ENCODE measurements at regions of chr3 and their contacts with region 1.

Region 1: GRCh38 chr3:131381444-131382291 is at the start of gene NUDT16:
- DNase-seq: peak; percentile 99
- H3K4me3 Mint-ChIP-seq: peak within 1 kb of the TSS; percentile 93
- H3K27ac Mint-ChIP-seq: peak within 1 kb of the TSS; percentile 84
- H3K4me1 Mint-ChIP-seq: peaks cover 22% of the 10 kb centered on the region
- H3K27me3 Mint-ChIP-seq: no peaks in the 10 kb centered on the region
- total RNA-seq, gene NUDT16: 7.4 to 8.6 TPM

Region 2: GRCh38 chr3:131402391-131403039 is 20.8 kb after region 1 on chr3:
- CTCF ChIA-PET with region 1: no interaction called
- POLR2A ChIA-PET with region 1: no interaction called
- intact Hi-C with region 1: no loop called
- DNase-seq: no peak
- H3K4me3 Mint-ChIP-seq: no peak overlapping the region
- H3K27ac Mint-ChIP-seq: no peak overlapping the region
- H3K4me1 Mint-ChIP-seq: no peaks in the 10 kb centered on the region
- H3K27me3 Mint-ChIP-seq: no peaks in the 10 kb centered on the region

Region 3: GRCh38 chr3:131470377-131470776 is 88.7 kb after region 1 on chr3:
- CTCF ChIA-PET with region 1: interaction called, 4 read pairs
- POLR2A ChIA-PET with region 1: no interaction called
- intact Hi-C with region 1: loop called (anchors 10 kb)
- DNase-seq: no peak
- H3K4me3 Mint-ChIP-seq: no peak overlapping the region
- H3K27ac Mint-ChIP-seq: peak overlapping the region; percentile 55
- H3K4me1 Mint-ChIP-seq: peaks cover 33% of the 10 kb centered on the region
- H3K27me3 Mint-ChIP-seq: no peaks in the 10 kb centered on the region

Measured in activated CD4-positive, alpha-beta memory T cell treated with anti-CD3 and anti-CD28 coated beads for 36 hours (primary cell).